Mammary epithelial cell (primary cell): ENCODE measurements at regions of chr22 and their contacts with region 1.

Region 1: GRCh38 chr22:48647606-48648515 is 1179.8 kb downstream of the BRD1 start:
- DNase-seq: no peak
- H3K4me3 ChIP-seq: no peak overlapping the region
- H3K27ac ChIP-seq: no peak overlapping the region
- H3K4me1 ChIP-seq: no peaks in the 10 kb centered on the region
- H3K27me3 ChIP-seq: no peaks in the 10 kb centered on the region
- CTCF ChIP-seq: no peak

Region 2: GRCh38 chr22:48574776-48575565 is 72.9 kb before region 1 on chr22:
- CTCF ChIA-PET with region 1: no interaction called
- dilution Hi-C with region 1: loop called (anchors 5 kb)
- in situ Hi-C with region 1: no loop called
- intact Hi-C with region 1: no loop called
- DNase-seq: peak; percentile 7
- H3K4me3 ChIP-seq: no peak overlapping the region
- H3K27ac ChIP-seq: no peak overlapping the region
- H3K4me1 ChIP-seq: no peaks in the 10 kb centered on the region
- H3K27me3 ChIP-seq: peaks cover 4% of the 10 kb centered on the region
- CTCF ChIP-seq: no peak

Region 3: DNA sequence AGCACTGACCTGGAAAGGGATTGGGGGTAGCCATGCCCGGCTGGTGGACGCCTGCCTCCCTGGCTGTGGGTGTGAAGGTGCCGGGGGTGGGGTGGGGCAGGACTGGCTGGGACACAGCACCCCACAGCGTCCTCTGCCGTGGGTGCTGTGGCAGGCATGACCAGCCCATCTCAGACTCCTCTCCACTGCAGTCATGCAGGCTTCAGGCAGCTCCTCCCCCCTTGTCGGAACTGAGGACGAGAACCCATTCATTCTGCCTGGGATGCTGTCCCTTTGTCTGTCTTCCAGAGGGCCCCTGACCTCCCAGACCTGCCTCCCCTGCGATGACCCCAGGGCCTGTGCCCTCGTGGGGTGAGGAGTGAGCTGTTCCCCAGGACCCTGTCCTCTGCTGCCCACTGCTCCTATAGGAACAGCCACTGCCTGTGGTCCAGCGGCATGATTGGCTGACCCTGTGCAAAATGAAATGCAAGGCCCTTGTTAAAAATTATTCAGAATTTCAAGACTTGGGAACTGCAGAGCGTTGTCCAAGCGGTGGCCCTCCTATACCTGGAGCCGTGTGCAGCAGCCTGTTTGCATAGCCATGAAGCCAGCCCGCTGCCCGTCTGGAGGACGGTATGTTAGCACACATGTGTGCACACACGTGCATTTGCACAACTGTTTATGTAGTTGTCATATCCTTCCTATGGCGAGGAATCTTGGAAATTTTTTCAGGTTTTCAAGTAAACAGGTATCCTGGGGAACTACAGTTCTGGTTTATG is 57.5 kb after region 1 on chr22:
- CTCF ChIA-PET with region 1: no interaction called
- dilution Hi-C with region 1: loop called (anchors 5 kb)
- in situ Hi-C with region 1: no loop called
- intact Hi-C with region 1: no loop called
- DNase-seq: no peak
- H3K4me3 ChIP-seq: no peak overlapping the region
- H3K27ac ChIP-seq: no peak overlapping the region
- H3K4me1 ChIP-seq: no peaks in the 10 kb centered on the region
- H3K27me3 ChIP-seq: no peaks in the 10 kb centered on the region
- CTCF ChIP-seq: no peak

Region 4: DNA sequence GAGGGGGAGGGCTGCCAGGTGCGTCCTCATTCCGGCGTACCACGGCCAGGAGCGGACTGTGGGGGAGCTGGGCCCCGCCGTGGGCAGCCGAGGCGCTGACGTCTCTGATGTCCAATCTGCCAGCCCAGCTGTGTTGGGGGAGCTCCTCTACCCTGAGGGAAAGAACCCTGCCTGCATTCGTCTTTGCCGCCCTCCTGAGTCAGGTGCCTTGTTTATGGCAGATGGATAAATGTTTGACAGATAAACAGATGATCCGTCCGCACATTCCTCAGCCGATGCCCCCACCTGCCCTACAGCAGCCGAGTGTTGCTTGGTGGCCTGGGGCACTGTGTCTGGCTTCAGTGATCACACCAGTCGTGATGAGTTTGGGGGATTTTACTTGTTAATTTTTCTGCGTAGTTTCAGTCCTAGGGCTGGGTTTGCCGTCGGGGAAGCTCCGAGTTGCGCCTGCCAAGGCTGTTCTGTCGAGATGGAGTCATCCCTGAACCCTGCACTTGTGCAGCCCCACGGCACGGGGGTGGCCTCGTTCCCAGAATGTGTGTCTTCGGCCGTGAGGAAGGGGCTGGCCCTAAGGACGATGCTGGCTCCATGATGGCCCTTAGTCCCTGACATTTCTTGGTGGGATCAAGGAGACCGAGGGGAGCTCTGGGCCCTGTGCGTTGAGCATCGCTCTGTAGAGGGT is 95.9 kb after region 1 on chr22:
- CTCF ChIA-PET with region 1: no interaction called
- dilution Hi-C with region 1: loop called (anchors 5 kb)
- in situ Hi-C with region 1: no loop called
- intact Hi-C with region 1: no loop called
- DNase-seq: no peak
- H3K4me3 ChIP-seq: no peak overlapping the region
- H3K27ac ChIP-seq: no peak overlapping the region
- H3K4me1 ChIP-seq: no peaks in the 10 kb centered on the region
- H3K27me3 ChIP-seq: no peaks in the 10 kb centered on the region
- CTCF ChIP-seq: no peak

Region 5: GRCh38 chr22:48896766-48897644 is 249.1 kb after region 1 on chr22:
- CTCF ChIA-PET with region 1: no interaction called
- dilution Hi-C with region 1: loop called (anchors 5 kb)
- in situ Hi-C with region 1: no loop called
- intact Hi-C with region 1: no loop called
- DNase-seq: no peak
- H3K4me3 ChIP-seq: no peak overlapping the region
- H3K27ac ChIP-seq: no peak overlapping the region
- H3K4me1 ChIP-seq: no peaks in the 10 kb centered on the region
- H3K27me3 ChIP-seq: no peaks in the 10 kb centered on the region
- CTCF ChIP-seq: no peak